ENCODE measurements at regions of chr2 and their contacts with region 1.

Region 1: GRCh38 chr2:174412256-174412655 is 16.7 kb downstream of the SCRN3 start:
- DNase-seq: no peak
- H3K4me3 ChIP-seq: no peak overlapping the region
- H3K27ac ChIP-seq: no peak overlapping the region
- H3K4me1 ChIP-seq: no peaks in the 10 kb centered on the region
- CTCF ChIP-seq: no peak

Region 2: GRCh38 chr2:174428214-174428613 is 16.0 kb after region 1 on chr2:
- CTCF ChIA-PET with region 1: no interaction called
- POLR2A ChIA-PET with region 1: interaction called, 12 read pairs
- intact Hi-C with region 1: no loop called
- DNase-seq: no peak
- H3K4me3 ChIP-seq: no peak overlapping the region
- H3K27ac ChIP-seq: no peak overlapping the region
- H3K4me1 ChIP-seq: no peaks in the 10 kb centered on the region
- CTCF ChIP-seq: no peak